Caco-2 (cell line): ENCODE measurements at regions of chr7 and their contacts with region 1.

Region 1: GRCh38 chr7:35707422-35707821 is 12.5 kb upstream of the HERPUD2 start:
- DNase-seq: peak; percentile 66 to 68
- H3K4me3 ChIP-seq: no peak overlapping the region
- H3K4me3 Mint-ChIP-seq: peak overlapping the region; percentile 6
- H3K27ac Mint-ChIP-seq: peak overlapping the region; percentile 64
- H3K4me1 ChIP-seq: peaks cover 44% of the 10 kb centered on the region
- H3K4me1 Mint-ChIP-seq: peaks cover 30% of the 10 kb centered on the region
- H3K27me3 ChIP-seq: no peaks in the 10 kb centered on the region
- H3K27me3 Mint-ChIP-seq: no peaks in the 10 kb centered on the region
- CTCF ChIP-seq: no peak

Region 2: DNA sequence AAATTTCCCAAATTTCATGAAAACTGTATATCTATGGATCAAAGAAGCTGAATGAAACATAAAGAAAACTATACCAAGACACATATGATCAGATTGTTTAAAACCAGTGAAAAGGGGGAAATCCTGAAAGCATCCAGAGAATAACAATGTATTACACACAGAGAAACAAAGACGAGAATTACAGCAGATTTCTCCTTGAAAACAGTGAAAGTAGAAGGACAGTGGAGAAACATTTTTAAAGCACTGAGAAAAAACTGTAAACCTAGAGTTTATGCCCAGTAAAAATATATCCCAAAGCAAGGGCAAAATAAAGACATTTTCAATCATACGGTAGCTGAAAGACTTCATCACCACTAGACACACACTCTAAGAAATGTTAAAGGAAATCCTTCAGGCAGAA is 791.2 kb before region 1 on chr7:
- CTCF ChIA-PET with region 1: no interaction called
- POLR2A ChIA-PET with region 1: no interaction called
- intact Hi-C with region 1: no loop called
- DNase-seq: no peak
- H3K4me3 ChIP-seq: no peak overlapping the region
- H3K4me3 Mint-ChIP-seq: no peak overlapping the region
- H3K27ac Mint-ChIP-seq: no peak overlapping the region
- H3K4me1 ChIP-seq: no peaks in the 10 kb centered on the region
- H3K4me1 Mint-ChIP-seq: no peaks in the 10 kb centered on the region
- H3K27me3 ChIP-seq: no peaks in the 10 kb centered on the region
- H3K27me3 Mint-ChIP-seq: peaks cover 2% of the 10 kb centered on the region
- CTCF ChIP-seq: no peak

Region 3: GRCh38 chr7:35694781-35695472 is 12.5 kb before region 1 on chr7 and contains the start of gene HERPUD2:
- CTCF ChIA-PET with region 1: interaction called, 4 read pairs
- POLR2A ChIA-PET with region 1: interaction called, 3 read pairs
- intact Hi-C with region 1: loop called (anchors 1 kb)
- DNase-seq: peak; percentile 98
- H3K4me3 ChIP-seq: peak within 1 kb of the TSS; percentile 98
- H3K4me3 Mint-ChIP-seq: peak within 1 kb of the TSS; percentile 95
- H3K27ac Mint-ChIP-seq: peak within 1 kb of the TSS; percentile 94
- H3K4me1 ChIP-seq: peaks cover 40% of the 10 kb centered on the region
- H3K4me1 Mint-ChIP-seq: peaks cover 36% of the 10 kb centered on the region
- H3K27me3 ChIP-seq: no peaks in the 10 kb centered on the region
- H3K27me3 Mint-ChIP-seq: no peaks in the 10 kb centered on the region
- CTCF ChIP-seq: no peak
- total RNA-seq, gene HERPUD2: 25.2 and 29.6 TPM in 2 replicates

Region 4: GRCh38 chr7:35758421-35758820 is 51.0 kb after region 1 on chr7:
- CTCF ChIA-PET with region 1: interaction called, 4 read pairs
- POLR2A ChIA-PET with region 1: no interaction called
- intact Hi-C with region 1: loop called (anchors 1 kb)
- DNase-seq: peak; percentile 87 to 88
- H3K4me3 ChIP-seq: no peak overlapping the region
- H3K4me3 Mint-ChIP-seq: peak overlapping the region; percentile 15
- H3K27ac Mint-ChIP-seq: peak overlapping the region; percentile 46
- H3K4me1 ChIP-seq: peaks cover 95% of the 10 kb centered on the region
- H3K4me1 Mint-ChIP-seq: peaks cover 39% of the 10 kb centered on the region
- H3K27me3 ChIP-seq: no peaks in the 10 kb centered on the region
- H3K27me3 Mint-ChIP-seq: no peaks in the 10 kb centered on the region
- CTCF ChIP-seq: peak; percentile 50 to 66

Region 5: GRCh38 chr7:35906191-35906908 is 198.9 kb after region 1 on chr7:
- CTCF ChIA-PET with region 1: interaction called, 8 read pairs
- POLR2A ChIA-PET with region 1: no interaction called
- intact Hi-C with region 1: loop called (anchors 1 kb)
- DNase-seq: peak; percentile 60 to 75
- H3K4me3 ChIP-seq: no peak overlapping the region
- H3K4me3 Mint-ChIP-seq: no peak overlapping the region
- H3K27ac Mint-ChIP-seq: no peak overlapping the region
- H3K4me1 ChIP-seq: no peaks in the 10 kb centered on the region
- H3K4me1 Mint-ChIP-seq: no peaks in the 10 kb centered on the region
- H3K27me3 ChIP-seq: no peaks in the 10 kb centered on the region
- H3K27me3 Mint-ChIP-seq: no peaks in the 10 kb centered on the region
- CTCF ChIP-seq: peak; percentile 74 to 88

Region 6: DNA sequence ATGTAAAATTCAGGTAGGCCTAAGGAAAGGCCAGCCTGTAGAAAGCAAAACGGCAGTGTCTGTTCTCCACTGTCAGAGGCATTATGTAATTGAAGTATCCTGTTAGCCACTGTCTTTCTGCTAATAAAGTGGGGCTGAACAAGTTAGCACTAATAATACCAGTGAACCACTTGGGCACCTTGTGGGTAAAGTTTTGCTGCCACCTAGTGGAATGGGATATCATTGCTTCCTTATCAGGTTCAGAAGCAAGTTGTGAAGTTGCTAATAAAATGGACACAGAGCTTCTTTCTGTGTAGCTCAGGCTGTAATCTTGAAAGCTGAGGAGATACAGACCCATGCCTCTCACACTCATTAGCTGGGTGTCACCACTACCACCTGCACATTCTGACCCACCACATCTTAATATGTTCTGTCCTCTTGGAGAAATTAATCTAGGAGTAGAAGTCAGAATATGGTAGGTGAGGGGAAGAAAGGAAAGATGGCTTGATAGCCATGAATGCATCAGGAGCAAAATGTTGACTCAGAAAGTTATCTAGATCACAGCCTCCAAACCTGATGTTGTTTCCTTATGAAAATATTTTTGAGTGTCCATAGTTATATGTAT is 268.5 kb after region 1 on chr7:
- CTCF ChIA-PET with region 1: interaction called, 3 read pairs
- POLR2A ChIA-PET with region 1: no interaction called
- intact Hi-C with region 1: loop called (anchors 5 kb)
- DNase-seq: peak; percentile 68 to 77
- H3K4me3 ChIP-seq: no peak overlapping the region
- H3K4me3 Mint-ChIP-seq: no peak overlapping the region
- H3K27ac Mint-ChIP-seq: no peak overlapping the region
- H3K4me1 ChIP-seq: peaks cover 4% of the 10 kb centered on the region; the same call in 1 of the 2 replicates
- H3K4me1 Mint-ChIP-seq: peaks cover 6% of the 10 kb centered on the region
- H3K27me3 ChIP-seq: no peaks in the 10 kb centered on the region
- H3K27me3 Mint-ChIP-seq: peaks cover 6% of the 10 kb centered on the region
- CTCF ChIP-seq: peak; percentile 71 to 79

Region 7: GRCh38 chr7:36777062-36777461 is 1069.6 kb after region 1 on chr7:
- CTCF ChIA-PET with region 1: no interaction called
- POLR2A ChIA-PET with region 1: no interaction called
- intact Hi-C with region 1: no loop called
- DNase-seq: no peak
- H3K4me3 ChIP-seq: no peak overlapping the region
- H3K4me3 Mint-ChIP-seq: no peak overlapping the region
- H3K27ac Mint-ChIP-seq: no peak overlapping the region
- H3K4me1 ChIP-seq: no peaks in the 10 kb centered on the region; the same call in 1 of the 2 replicates
- H3K4me1 Mint-ChIP-seq: peaks cover 9% of the 10 kb centered on the region
- H3K27me3 ChIP-seq: no peaks in the 10 kb centered on the region
- H3K27me3 Mint-ChIP-seq: no peaks in the 10 kb centered on the region
- CTCF ChIP-seq: no peak